ENCODE measurements at regions of chr17 and their contacts with region 1.

Region 1: GRCh38 chr17:31842183-31843069 is 16.6 kb downstream of the COPRS start:
- DNase-seq: peak; percentile 60
- H3K4me3 ChIP-seq: peak overlapping the region; percentile 39; the same call in 1 of the 2 replicates
- H3K27ac ChIP-seq: peak overlapping the region; percentile 73
- H3K27me3 ChIP-seq: no peaks in the 10 kb centered on the region
- CTCF ChIP-seq: peak; percentile 97

Region 2: DNA sequence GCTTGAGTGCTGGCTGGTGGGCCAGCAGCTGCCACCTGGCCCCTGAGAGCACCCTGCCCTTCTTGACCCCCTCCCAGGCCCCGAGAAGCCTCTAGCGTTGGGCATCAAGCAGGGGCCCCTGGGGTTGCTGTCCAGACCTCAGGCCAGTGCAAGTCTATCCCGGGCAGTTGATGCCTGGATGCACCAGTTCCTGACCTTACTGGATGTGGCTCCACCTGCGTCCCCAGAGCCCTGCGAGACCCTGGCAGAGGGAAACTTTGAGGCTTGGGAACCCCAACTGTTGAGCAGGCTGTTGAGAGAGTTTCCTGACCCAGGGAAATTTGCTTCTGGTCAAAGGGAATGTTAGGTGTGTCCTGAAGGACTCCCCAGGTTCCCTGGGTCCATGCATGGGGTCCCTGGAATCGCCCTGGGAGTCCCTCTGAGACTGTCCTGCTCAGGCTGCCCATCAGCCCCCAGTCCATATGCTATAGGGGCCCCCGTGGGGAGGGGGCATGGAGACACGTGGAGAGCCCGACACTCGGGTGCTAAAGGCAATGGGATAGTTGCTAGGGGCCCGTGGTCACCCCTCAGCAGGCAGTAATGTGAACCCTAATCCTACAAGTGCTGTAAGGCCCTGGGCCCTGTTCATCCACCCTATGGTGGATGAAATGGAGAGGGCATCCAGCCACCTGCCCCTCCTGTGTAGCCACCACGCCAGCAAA is 404.6 kb before region 1 on chr17:
- CTCF ChIA-PET with region 1: interaction called, 22 read pairs
- POLR2A ChIA-PET with region 1: no interaction called
- DNase-seq: no peak
- H3K4me3 ChIP-seq: no peak overlapping the region
- H3K27ac ChIP-seq: no peak overlapping the region
- H3K27me3 ChIP-seq: peaks cover 11% of the 10 kb centered on the region
- CTCF ChIP-seq: no peak

Region 3: DNA sequence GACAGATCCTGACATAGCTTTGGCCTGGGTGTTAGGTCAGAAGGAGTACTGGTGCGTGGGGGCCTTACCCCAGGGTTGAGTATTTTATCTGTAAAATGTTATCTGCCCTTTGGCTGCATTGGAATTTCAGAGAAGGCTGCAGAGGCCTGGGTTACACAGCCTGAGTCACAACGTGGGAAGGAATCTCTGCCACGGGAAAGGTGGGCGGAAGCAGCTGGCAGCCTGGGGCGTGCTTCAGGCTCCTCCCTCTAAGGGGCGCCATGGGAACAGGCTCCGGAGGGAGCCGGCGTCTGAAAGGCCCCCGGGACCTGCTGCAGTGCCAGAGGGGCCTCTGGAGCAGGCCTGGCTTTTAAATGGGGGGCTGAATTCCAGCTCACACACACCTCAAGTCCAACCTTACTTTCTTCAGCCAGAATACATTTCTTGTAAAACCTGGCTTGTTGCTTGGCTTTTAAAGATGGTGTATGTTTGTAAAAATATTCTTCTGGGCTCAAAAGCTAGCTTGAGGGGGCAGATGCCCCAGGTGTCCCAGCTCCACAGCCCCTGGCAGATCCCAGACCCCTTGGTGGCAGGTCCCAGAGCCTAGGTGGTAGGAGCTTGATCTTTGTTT is 308.8 kb before region 1 on chr17:
- CTCF ChIA-PET with region 1: interaction called, 25 read pairs
- POLR2A ChIA-PET with region 1: no interaction called
- DNase-seq: peak; percentile 64
- H3K4me3 ChIP-seq: no peak overlapping the region
- H3K27ac ChIP-seq: peak overlapping the region; percentile 61
- H3K27me3 ChIP-seq: no peaks in the 10 kb centered on the region
- CTCF ChIP-seq: peak; percentile 21; the same call in 1 of the 2 replicates

Region 4: GRCh38 chr17:31558748-31559644 is 283.4 kb before region 1 on chr17:
- CTCF ChIA-PET with region 1: interaction called, 86 read pairs
- POLR2A ChIA-PET with region 1: interaction called, 9 read pairs
- DNase-seq: no peak
- H3K4me3 ChIP-seq: peak overlapping the region; percentile 69
- H3K27ac ChIP-seq: peak overlapping the region; percentile 65
- H3K27me3 ChIP-seq: no peaks in the 10 kb centered on the region
- CTCF ChIP-seq: peak; percentile 57

Region 5: GRCh38 chr17:31854672-31855071 is 12.2 kb after region 1 on chr17:
- CTCF ChIA-PET with region 1: interaction called, 10 read pairs
- POLR2A ChIA-PET with region 1: interaction called, 5 read pairs
- DNase-seq: no peak
- H3K4me3 ChIP-seq: no peak overlapping the region
- H3K27ac ChIP-seq: no peak overlapping the region
- H3K27me3 ChIP-seq: no peaks in the 10 kb centered on the region
- CTCF ChIP-seq: no peak

Measured in AG04450 (cell line).